Common myeloid progenitor, CD34-positive (primary cell): ENCODE measurements at regions of chrX and their contacts with region 1.

Region 1: DNA sequence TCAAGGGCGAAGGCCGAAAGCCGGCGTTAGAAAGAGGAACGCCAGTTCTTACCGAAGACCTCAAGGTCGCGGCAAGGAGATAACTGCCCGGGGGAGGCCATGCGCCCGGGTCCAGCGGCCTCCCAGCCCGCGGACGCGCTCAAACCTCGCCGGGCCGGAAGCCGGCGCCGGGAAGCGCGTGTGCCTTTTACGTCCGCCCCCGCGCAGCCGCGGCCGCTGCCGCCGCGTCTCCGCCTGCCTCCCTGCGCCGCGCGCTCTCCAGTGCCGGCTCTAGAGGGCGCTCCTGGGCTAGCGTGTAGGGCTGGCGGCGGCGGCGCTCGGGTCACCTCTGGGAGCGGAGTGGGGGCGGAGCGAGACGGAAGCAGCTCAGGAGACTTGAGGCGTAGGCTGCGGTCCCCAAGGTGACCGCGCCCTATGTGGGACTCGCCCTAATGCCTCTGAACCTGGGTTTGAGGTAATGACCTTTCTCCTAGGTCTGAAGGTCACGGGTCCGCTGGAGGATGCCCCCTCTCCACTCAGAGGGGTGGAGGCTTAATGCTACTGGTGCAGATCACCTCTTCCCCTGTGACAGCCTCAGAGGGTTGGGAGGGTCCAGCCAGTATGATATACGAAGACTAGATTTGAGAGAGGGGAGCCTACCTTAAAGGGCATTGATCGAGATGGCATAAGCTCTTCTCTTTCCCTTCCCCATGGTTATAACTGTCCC is 839 bp downstream of the SLC25A5 start:
- DNase-seq: peak; percentile 74 to 89 (median 87)
- H3K4me3 ChIP-seq: peak overlapping the region; percentile 71 to 87 (median 78)
- H3K27ac ChIP-seq: peak overlapping the region; percentile 74 to 86
- H3K4me1 ChIP-seq: peaks cover 0 to 13% (median 7%) of the 10 kb centered on the region in 4 experiments
- H3K27me3 ChIP-seq: no peaks in the 10 kb centered on the region

Region 2: DNA sequence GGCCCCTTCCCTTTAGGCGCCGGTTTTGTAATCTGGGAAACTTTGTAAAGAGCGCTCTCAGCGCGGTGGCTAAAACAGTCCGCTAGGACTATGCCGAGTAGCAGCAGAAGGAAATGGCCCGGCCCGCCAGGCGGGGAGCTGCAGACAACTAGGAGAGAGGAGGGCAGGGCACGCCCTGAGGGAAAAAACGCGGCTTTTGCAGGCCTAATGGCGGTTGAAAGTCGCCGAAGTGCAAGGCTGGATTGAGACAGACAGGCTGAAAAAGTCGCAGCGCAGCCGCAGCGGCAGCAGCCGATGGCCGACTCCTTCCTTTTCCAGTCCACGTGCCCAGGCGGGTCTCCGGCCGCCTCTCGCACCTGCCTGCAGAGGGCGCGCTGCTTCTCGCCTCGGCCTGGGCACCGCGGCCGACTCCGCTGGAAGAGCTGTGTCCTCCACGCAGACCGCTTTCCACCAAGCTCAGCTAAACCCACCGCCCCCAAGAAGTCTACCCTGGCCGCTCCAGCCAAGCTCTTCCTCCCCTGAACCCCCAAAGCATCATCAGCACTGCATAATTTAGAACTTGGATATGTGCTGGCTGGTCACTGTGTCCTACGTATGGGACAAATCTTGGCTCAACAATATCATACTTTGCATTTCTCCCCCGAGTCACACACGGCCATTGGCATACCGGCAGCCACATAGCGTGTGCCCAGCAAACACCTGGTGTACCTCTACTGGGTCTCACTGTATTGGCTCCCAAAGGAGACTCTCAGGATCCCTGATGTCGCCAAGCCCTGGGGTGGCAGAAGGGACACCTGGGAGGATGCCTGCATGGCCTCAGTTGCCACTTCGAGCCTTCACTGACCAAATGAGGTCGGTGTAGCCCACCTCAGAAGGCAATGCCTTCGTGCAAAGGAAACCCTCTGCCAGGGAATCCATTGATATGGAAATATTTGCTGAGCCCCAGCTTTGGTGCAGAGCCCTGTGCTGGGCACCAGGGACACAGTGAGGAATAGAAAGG is 13.7 kb after region 1 on chrX:
- CTCF ChIA-PET with region 1: interaction called, 16 read pairs
- POLR2A ChIA-PET with region 1: no interaction called
- DNase-seq: peak; percentile 68 to 84 (median 79)
- H3K4me3 ChIP-seq: peak overlapping the region; percentile 12 to 73 (median 43)
- H3K27ac ChIP-seq: peak overlapping the region in 1 of 2 experiments; percentile 5
- H3K4me1 ChIP-seq: peaks cover 0 to 4% (median 1%) of the 10 kb centered on the region in 4 experiments
- H3K27me3 ChIP-seq: peaks cover 0 to 5% (median 0%) of the 10 kb centered on the region in 5 experiments

Region 3: GRCh38 chrX:119512146-119512800 is 43.2 kb after region 1 on chrX:
- CTCF ChIA-PET with region 1: interaction called, 22 read pairs
- POLR2A ChIA-PET with region 1: interaction called, 3 read pairs
- DNase-seq: peak; percentile 55 to 76 (median 73)
- H3K4me3 ChIP-seq: no peak overlapping the region
- H3K27ac ChIP-seq: no peak overlapping the region
- H3K4me1 ChIP-seq: no peaks in the 10 kb centered on the region
- H3K27me3 ChIP-seq: no peaks in the 10 kb centered on the region

Region 4: DNA sequence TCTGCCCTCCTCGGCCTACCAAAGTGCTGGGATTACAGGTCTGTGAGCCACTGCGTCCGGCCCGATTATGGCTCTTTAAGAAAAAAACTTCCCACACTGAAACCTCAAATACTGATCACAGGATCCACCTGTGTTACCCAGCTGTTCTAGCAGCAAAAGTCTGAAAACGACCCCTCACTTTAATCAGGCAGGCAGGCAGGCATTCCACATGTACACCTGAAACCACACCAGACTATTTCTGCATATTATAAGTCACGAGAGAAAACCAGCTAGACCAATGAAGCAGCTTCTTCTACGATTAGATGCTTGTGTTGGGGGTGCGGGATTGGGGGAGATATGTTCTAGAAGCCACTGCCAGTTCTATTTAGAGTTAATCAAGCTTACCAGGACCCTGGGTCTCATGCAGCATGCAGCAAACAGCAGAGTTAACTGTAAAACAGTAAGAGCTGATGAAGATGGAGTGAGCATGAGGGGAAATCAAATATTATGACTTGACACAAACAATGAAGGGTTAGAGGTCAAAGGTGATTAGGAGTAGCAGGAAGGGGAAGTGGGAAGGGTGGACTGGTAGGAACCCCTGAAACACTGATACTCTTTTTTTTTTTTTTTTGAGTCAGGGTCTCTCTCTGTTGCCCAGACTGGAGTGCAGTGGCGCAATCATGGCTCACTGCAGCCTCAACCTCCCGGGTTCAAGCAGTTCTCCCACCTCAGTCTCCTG is 156.0 kb after region 1 on chrX:
- CTCF ChIA-PET with region 1: no interaction called
- POLR2A ChIA-PET with region 1: no interaction called
- DNase-seq: no peak
- H3K4me3 ChIP-seq: no peak overlapping the region
- H3K27ac ChIP-seq: no peak overlapping the region
- H3K4me1 ChIP-seq: peaks cover 0 to 20% (median 8%) of the 10 kb centered on the region in 4 experiments
- H3K27me3 ChIP-seq: no peaks in the 10 kb centered on the region

Region 5: DNA sequence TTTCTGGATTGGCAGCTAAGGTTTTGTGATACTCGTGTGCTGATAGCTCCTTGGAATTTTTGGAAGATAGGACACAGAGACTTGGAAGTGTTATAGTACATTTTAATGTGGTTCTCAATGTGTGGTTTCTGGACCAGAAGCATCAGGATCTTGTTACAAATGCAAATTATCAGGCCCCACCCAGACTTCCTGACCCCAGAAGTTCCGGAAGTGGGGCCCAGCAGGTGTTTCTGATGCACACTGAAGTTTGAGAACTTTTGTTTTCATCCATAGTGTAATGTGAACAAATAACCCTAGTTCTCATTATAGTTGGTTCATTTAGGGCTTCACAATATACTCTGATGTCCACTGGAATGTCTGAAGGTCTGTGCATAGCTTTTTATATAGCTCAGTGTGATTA is 950.4 kb after region 1 on chrX:
- CTCF ChIA-PET with region 1: no interaction called
- POLR2A ChIA-PET with region 1: no interaction called
- DNase-seq: peak; percentile 52 to 89 (median 85)
- H3K4me3 ChIP-seq: no peak overlapping the region
- H3K27ac ChIP-seq: no peak overlapping the region
- H3K4me1 ChIP-seq: peaks cover 4 to 23% (median 10%) of the 10 kb centered on the region in 4 experiments
- H3K27me3 ChIP-seq: peaks cover 0 to 5% (median 0%) of the 10 kb centered on the region in 5 experiments